ENCODE measurements at regions of chr18 and their contacts with region 1.

Region 1: DNA sequence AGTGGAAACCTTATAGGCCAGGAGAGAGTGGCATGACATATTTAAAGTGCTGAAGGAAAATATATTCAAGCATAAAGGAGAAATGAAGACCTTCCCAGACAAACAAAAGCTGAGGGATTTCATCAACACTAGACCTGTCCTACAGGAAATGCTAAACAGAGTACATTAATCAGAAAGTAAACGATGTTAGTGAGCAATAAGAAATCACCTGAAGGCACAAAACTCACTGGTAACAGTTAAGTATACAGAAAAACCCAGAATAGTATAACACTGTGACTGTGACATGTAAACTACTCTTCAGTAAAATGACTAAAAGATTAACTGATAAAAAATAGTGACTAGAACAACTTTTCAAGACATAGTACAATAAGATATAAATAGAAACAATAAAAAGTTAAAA is 87.4 kb downstream of the ATP8B1 start:
- DNase-seq: no peak
- ATAC-seq: no peak
- H3K4me3 ChIP-seq: no peak overlapping the region
- H3K27ac ChIP-seq: no peak overlapping the region
- H3K4me1 ChIP-seq: peaks cover 0 to 38% (median 17%) of the 10 kb centered on the region in 9 donors
- H3K27me3 ChIP-seq: no peaks in the 10 kb centered on the region
- CTCF ChIP-seq: no peak

Region 2: GRCh38 chr18:57630002-57630753 is 85.5 kb before region 1 on chr18:
- intact Hi-C with region 1: no loop called
- DNase-seq: peak; percentile 97
- ATAC-seq: peak; percentile 97 to 100 (median 99)
- H3K4me3 ChIP-seq: peak overlapping the region; percentile 50 to 77 (median 64)
- H3K27ac ChIP-seq: peak overlapping the region in 9 of 10 donors; percentile 71 to 91 (median 77)
- H3K4me1 ChIP-seq: peaks cover 0 to 19% (median 7%) of the 10 kb centered on the region in 9 donors
- H3K27me3 ChIP-seq: no peaks in the 10 kb centered on the region
- CTCF ChIP-seq: peak; percentile 39 to 92 (median 78)

Region 3: GRCh38 chr18:57759640-57760039 is 44.0 kb after region 1 on chr18:
- intact Hi-C with region 1: loop called in 1 of 10 experiments (anchors 5 kb)
- DNase-seq: no peak
- ATAC-seq: no peak
- H3K4me3 ChIP-seq: no peak overlapping the region
- H3K27ac ChIP-seq: no peak overlapping the region
- H3K4me1 ChIP-seq: peaks cover 0 to 14% (median 1%) of the 10 kb centered on the region in 9 donors
- H3K27me3 ChIP-seq: no peaks in the 10 kb centered on the region
- CTCF ChIP-seq: no peak

Region 4: GRCh38 chr18:57780706-57781347 is 65.1 kb after region 1 on chr18:
- intact Hi-C with region 1: no loop called
- DNase-seq: no peak
- ATAC-seq: peak; percentile 33 to 75 (median 58)
- H3K4me3 ChIP-seq: peak overlapping the region in 4 of 10 donors; percentile 2 to 12 (median 8)
- H3K27ac ChIP-seq: peak overlapping the region; percentile 24 to 89 (median 84)
- H3K4me1 ChIP-seq: peaks cover 0 to 86% (median 74%) of the 10 kb centered on the region in 9 donors
- H3K27me3 ChIP-seq: no peaks in the 10 kb centered on the region
- CTCF ChIP-seq: no peak